ENCODE measurements at regions of chr7 and their contacts with region 1.

Region 1: DNA sequence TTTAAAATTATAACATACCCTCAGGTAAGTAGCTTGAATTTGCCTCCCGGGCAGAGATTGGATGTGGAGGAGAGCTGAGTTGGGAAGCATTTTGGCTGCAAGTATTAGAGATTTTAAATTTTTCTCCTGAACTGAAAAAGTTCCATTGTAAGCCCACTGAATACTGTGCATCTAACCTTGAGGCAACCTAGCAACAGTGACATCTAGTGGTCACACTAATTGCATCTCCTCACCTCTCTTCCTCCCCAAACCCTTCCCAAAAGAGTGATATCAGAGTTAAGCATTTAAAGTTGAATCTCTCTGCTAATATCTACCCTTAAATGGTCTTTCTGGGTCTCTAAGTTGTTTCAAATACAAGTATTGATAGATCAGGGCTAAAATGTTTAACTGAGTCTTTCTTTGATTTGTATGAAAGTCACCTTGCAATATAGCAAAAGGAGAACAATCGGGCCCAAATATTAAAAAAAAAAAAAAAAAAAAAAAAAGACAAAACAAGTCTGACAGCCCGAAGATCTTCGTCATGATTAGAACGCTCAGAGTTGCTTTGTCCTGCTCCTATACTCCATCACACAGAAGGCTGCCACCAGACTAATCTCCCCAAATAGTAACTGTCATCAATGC is 40.4 kb upstream of the DLX5 start:
- DNase-seq: peak; percentile 5
- ATAC-seq: no peak
- H3K4me3 Mint-ChIP-seq: no peak overlapping the region
- H3K27ac Mint-ChIP-seq: no peak overlapping the region
- H3K4me1 Mint-ChIP-seq: no peaks in the 10 kb centered on the region
- H3K27me3 Mint-ChIP-seq: peaks cover 8% of the 10 kb centered on the region

Region 2: GRCh38 chr7:96075510-96076349 is 989.3 kb before region 1 on chr7:
- CTCF ChIA-PET with region 1: interaction called, 3 read pairs
- POLR2A ChIA-PET with region 1: no interaction called
- intact Hi-C with region 1: loop called in 1 of 2 experiments (anchors 1 kb)
- DNase-seq: peak; percentile 71
- ATAC-seq: peak; percentile 81
- H3K4me3 Mint-ChIP-seq: peak overlapping the region; percentile 69
- H3K27ac Mint-ChIP-seq: no peak overlapping the region
- H3K4me1 Mint-ChIP-seq: peaks cover 8% of the 10 kb centered on the region
- H3K27me3 Mint-ChIP-seq: peaks cover 34% of the 10 kb centered on the region

Region 3: DNA sequence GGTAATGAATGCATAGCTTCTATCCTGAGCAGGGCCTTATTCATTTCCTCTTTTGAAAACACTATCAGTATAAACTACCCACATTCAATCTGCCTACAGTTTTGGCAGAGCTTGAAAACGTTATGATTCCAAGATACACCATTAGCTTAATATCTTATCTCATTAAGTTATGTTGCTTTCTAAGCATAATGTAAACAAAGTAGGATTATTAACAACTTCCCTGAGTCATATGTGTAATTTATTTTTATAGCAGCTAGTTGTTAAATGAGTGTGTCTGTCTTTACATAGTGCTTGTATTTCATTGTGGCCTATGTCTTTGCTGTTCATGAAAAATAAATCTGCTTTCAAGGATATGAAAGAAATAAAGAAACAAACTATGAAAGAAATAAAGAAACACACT is 166.0 kb before region 1 on chr7:
- CTCF ChIA-PET with region 1: no interaction called
- POLR2A ChIA-PET with region 1: no interaction called
- intact Hi-C with region 1: no loop called
- DNase-seq: no peak
- ATAC-seq: no peak
- H3K4me3 Mint-ChIP-seq: no peak overlapping the region
- H3K27ac Mint-ChIP-seq: no peak overlapping the region
- H3K4me1 Mint-ChIP-seq: no peaks in the 10 kb centered on the region
- H3K27me3 Mint-ChIP-seq: peaks cover 12% of the 10 kb centered on the region

Region 4: GRCh38 chr7:97075928-97076327 is 10.9 kb after region 1 on chr7:
- CTCF ChIA-PET with region 1: interaction called, 14 read pairs
- POLR2A ChIA-PET with region 1: no interaction called
- intact Hi-C with region 1: no loop called
- DNase-seq: no peak
- ATAC-seq: no peak
- H3K4me3 Mint-ChIP-seq: no peak overlapping the region
- H3K27ac Mint-ChIP-seq: no peak overlapping the region
- H3K4me1 Mint-ChIP-seq: no peaks in the 10 kb centered on the region
- H3K27me3 Mint-ChIP-seq: peaks cover 25% of the 10 kb centered on the region

Measured in activated CD4-positive, alpha-beta T cell treated with anti-CD3 and anti-CD28 coated beads for 36 hours (primary cell).